Endothelial cell of umbilical vein (primary cell): ENCODE measurements at regions of chr7 and their contacts with region 1.

Region 1: GRCh38 chr7:33449847-33450246 is 320.5 kb downstream of the BBS9 start:
- DNase-seq: no peak
- H3K4me3 ChIP-seq: no peak overlapping the region
- H3K27ac ChIP-seq: no peak overlapping the region
- H3K4me1 ChIP-seq: no peaks in the 10 kb centered on the region
- H3K27me3 ChIP-seq: no peaks in the 10 kb centered on the region
- CTCF ChIP-seq: no peak
- POLR2A ChIP-seq: no peak

Region 2: DNA sequence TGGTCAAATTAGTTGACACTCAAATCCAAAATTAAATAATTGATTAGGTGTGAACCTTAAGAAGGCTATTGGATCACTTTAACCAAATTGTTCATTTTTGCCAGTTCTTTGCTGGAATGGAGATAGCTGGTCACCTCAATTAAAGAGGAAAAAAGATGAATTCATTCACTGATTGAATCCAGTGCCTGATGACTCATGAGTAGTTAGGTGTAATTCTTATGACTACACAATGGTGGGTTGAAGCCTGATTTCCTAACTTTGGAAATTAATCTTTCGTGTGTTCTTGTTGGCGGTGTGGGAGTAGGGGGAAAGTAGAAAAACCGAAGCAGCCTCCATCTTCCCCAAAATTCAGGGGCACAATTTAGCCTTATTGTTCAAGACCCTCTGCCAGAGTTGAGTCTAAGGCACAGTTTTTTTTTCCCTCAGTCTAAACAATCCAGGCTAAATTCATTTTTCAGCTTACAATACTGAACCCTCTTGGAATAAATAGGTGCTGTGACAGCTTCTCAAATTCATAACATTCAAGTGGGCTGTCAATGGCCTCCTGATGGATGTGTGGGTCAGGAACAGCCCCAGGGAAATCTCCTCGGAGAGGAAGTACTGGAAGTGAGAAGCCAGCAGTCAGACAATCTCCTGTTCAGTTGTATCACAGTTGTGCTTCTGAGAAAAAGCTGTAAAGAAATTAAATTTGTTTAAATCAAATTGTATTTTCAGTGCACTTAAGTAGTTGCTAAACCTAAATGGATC is 36.1 kb after region 1 on chr7:
- CTCF ChIA-PET with region 1: no interaction called
- POLR2A ChIA-PET with region 1: no interaction called
- dilution Hi-C with region 1: no loop called
- intact Hi-C with region 1: loop called (anchors 1 kb)
- DNase-seq: no peak
- H3K4me3 ChIP-seq: no peak overlapping the region
- H3K27ac ChIP-seq: no peak overlapping the region
- H3K4me1 ChIP-seq: no peaks in the 10 kb centered on the region
- H3K27me3 ChIP-seq: no peaks in the 10 kb centered on the region
- CTCF ChIP-seq: no peak
- POLR2A ChIP-seq: no peak

Region 3: GRCh38 chr7:33623267-33623666 is 173.4 kb after region 1 on chr7:
- CTCF ChIA-PET with region 1: no interaction called
- POLR2A ChIA-PET with region 1: no interaction called
- dilution Hi-C with region 1: no loop called
- intact Hi-C with region 1: no loop called
- DNase-seq: no peak
- H3K4me3 ChIP-seq: no peak overlapping the region
- H3K27ac ChIP-seq: no peak overlapping the region
- H3K4me1 ChIP-seq: no peaks in the 10 kb centered on the region
- H3K27me3 ChIP-seq: no peaks in the 10 kb centered on the region
- CTCF ChIP-seq: no peak
- POLR2A ChIP-seq: no peak